ENCODE measurements at regions of chr1 and their contacts with region 1.

Region 1: DNA sequence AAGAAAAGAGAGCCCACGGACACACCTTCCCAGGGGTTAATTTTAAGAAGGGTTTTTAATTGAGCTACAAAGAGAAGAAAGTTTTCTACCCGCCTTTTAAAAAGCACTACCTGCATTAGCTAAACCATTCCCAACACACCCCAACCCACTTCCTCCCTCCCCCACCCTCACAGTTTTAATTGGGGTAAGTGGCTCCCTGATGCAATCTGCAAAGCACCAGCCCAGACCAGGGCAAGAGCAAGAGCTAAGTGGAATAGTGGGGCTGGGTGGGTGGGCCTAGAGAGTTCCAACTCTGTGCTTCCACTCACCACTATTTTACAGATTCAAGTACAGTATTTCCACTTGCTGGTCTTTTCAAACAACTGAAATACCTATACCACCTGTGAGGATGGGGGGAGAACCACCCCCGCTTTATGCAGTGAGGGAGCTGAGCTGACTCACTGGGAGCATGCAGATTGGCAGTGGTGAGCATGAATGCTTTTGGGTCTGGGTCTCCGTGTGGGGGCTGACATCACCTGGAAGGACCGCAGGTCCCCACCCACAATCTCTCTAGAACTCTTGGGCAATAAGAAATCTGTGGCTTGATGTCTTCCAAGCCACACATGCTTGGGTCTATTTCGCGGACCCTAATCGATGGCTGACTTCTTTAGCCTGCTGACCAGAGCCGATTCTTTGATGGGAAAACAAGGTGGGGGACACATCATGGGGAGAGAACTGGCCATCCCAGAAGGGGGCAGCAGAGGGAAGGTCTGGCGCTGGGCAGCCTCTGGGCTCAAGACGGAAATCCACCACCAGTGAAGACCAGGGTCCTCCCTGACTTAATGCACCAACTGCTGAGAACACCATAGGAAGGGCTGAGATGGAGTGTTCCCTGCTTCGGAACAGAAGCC is 95.5 kb downstream of the SSBP3 start:
- DNase-seq: peak; percentile 66 to 79 (median 74)
- ATAC-seq: peak; percentile 89
- H3K4me3 ChIP-seq: no peak overlapping the region
- H3K27ac ChIP-seq: no peak overlapping the region
- H3K4me1 ChIP-seq: peaks cover 22 to 33% of the 10 kb centered on the region in 2 experiments
- H3K27me3 ChIP-seq: no peaks in the 10 kb centered on the region
- CTCF ChIP-seq: peak; percentile 77 to 81 (median 79)
- EP300 ChIP-seq: no peak
- POLR2A ChIP-seq: no peak
- RAD21 ChIP-seq: peak; percentile 73 to 90

Region 2: GRCh38 chr1:54273092-54273794 is 37.4 kb before region 1 on chr1:
- CTCF ChIA-PET with region 1: no interaction called
- POLR2A ChIA-PET with region 1: interaction called, 3 read pairs
- in situ Hi-C with region 1: no loop called
- intact Hi-C with region 1: loop called (anchors 2 kb)
- DNase-seq: peak; percentile 69 to 88 (median 77)
- ATAC-seq: peak; percentile 88
- H3K4me3 ChIP-seq: no peak overlapping the region; the same call in 1 of the 2 replicates
- H3K27ac ChIP-seq: peak overlapping the region; percentile 71
- H3K4me1 ChIP-seq: peaks cover 43 to 44% of the 10 kb centered on the region in 2 experiments
- H3K27me3 ChIP-seq: no peaks in the 10 kb centered on the region
- CTCF ChIP-seq: peak; percentile 73 to 83 (median 81); a peak in 5 of 6 replicates
- EP300 ChIP-seq: no peak; the same call in 1 of the 2 replicates
- POLR2A ChIP-seq: no peak
- RAD21 ChIP-seq: peak; percentile 76 to 94

Region 3: GRCh38 chr1:54347955-54348699 is 37.4 kb after region 1 on chr1:
- CTCF ChIA-PET with region 1: no interaction called
- POLR2A ChIA-PET with region 1: no interaction called
- in situ Hi-C with region 1: no loop called
- intact Hi-C with region 1: no loop called
- DNase-seq: no peak
- ATAC-seq: no peak
- H3K4me3 ChIP-seq: no peak overlapping the region
- H3K27ac ChIP-seq: no peak overlapping the region
- H3K4me1 ChIP-seq: peaks cover 0 to 5% of the 10 kb centered on the region in 2 experiments; a peak in 3 of 5 replicates
- H3K27me3 ChIP-seq: no peaks in the 10 kb centered on the region
- CTCF ChIP-seq: no peak
- EP300 ChIP-seq: no peak
- POLR2A ChIP-seq: no peak
- RAD21 ChIP-seq: no peak

Region 4: DNA sequence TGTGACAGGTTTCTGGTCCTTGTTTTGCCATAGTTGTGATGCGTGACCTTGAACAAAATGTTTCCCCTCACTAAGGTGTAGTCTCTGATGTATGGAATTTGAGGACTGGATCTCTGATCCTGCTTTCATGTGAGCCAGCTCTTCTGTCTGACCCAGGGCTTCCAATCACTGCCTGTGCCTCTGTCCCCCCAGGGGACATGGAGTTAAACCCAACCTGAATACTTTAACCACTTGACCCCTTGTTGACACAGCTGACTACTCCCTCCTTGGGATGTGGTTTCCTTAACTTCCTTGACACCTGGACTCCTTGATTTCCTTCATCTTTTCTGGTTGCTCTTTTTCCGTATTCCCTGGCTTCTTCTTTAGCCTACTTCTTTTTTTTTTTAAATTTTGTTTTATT is 131.5 kb after region 1 on chr1:
- CTCF ChIA-PET with region 1: no interaction called
- POLR2A ChIA-PET with region 1: no interaction called
- in situ Hi-C with region 1: no loop called
- intact Hi-C with region 1: no loop called
- DNase-seq: no peak
- ATAC-seq: no peak
- H3K4me3 ChIP-seq: no peak overlapping the region
- H3K27ac ChIP-seq: no peak overlapping the region
- H3K4me1 ChIP-seq: no peaks in the 10 kb centered on the region
- H3K27me3 ChIP-seq: no peaks in the 10 kb centered on the region
- CTCF ChIP-seq: no peak
- EP300 ChIP-seq: no peak
- POLR2A ChIP-seq: no peak
- RAD21 ChIP-seq: no peak